ENCODE measurements at regions of chr2 and their contacts with region 1.

Region 1: DNA sequence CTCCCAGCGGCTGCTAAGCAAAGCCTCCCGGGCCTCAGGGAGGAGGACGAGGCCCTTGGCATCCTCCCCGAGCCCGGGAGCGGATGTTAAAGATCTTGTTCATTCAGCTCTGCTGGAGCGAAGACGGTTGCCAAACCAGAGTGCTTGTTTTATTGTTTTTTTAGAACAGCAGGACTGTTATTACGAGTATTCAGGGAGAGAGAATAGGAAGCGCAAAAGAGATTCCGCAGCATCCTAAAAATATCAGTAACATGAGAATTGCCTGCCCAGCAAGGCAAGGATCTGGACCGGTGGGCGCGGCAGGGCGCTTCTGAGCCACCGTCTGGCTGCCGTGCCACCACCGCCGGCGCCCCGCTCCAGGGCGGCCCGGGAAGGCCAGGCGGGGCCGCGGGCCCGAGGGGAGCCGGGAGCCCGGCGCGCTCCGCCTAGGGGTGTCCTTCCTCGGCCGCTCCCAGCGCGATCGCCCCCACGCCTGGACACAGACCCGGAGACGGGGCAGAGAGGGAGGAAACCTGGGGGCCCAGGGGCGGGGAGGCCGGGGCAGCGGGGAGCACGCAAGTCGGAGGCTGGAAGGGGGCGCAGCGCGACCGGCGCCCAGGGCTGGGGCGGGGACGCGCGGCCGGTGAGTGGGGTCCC is 859 bp downstream of the CYS1 start:
- DNase-seq: peak; percentile 31
- H3K4me3 ChIP-seq: no peak overlapping the region
- H3K27ac ChIP-seq: no peak overlapping the region
- H3K4me1 ChIP-seq: peaks cover 55% of the 10 kb centered on the region
- CTCF ChIP-seq: no peak

Region 2: DNA sequence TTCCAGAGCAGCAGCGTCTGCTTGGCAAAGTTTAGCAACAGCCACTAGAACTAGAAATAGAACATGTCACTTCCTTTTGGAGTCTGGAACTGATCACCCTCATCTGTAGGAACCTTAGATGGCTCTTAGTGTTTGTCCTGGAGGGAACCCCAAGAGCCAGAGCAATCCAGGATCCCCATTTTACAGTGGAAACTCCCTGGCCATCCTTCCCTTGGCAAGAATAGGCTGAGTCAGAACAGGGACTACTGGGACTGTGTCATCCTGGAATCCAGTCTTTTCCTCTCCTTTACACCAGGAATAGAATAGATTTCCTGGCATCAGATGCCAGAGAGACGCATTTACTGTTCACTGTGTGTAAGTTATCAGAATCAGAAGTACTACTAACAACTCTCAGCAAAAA is 161.1 kb before region 1 on chr2:
- CTCF ChIA-PET with region 1: no interaction called
- POLR2A ChIA-PET with region 1: no interaction called
- intact Hi-C with region 1: no loop called
- DNase-seq: no peak
- H3K4me3 ChIP-seq: no peak overlapping the region
- H3K27ac ChIP-seq: no peak overlapping the region
- H3K4me1 ChIP-seq: no peaks in the 10 kb centered on the region
- CTCF ChIP-seq: no peak

Region 3: GRCh38 chr2:9961013-9961412 is 118.3 kb before region 1 on chr2:
- CTCF ChIA-PET with region 1: no interaction called
- POLR2A ChIA-PET with region 1: no interaction called
- intact Hi-C with region 1: no loop called
- DNase-seq: no peak
- H3K4me3 ChIP-seq: no peak overlapping the region
- H3K27ac ChIP-seq: no peak overlapping the region
- H3K4me1 ChIP-seq: peaks cover 7% of the 10 kb centered on the region
- CTCF ChIP-seq: no peak

Region 4: GRCh38 chr2:10097352-10098148 is 18.2 kb after region 1 on chr2:
- CTCF ChIA-PET with region 1: interaction called, 8 read pairs
- POLR2A ChIA-PET with region 1: interaction called, 6 read pairs
- intact Hi-C with region 1: loop called (anchors 1 kb)
- DNase-seq: peak; percentile 59
- H3K4me3 ChIP-seq: no peak overlapping the region
- H3K27ac ChIP-seq: no peak overlapping the region
- H3K4me1 ChIP-seq: peaks cover 10% of the 10 kb centered on the region
- CTCF ChIP-seq: peak; percentile 95

Region 5: DNA sequence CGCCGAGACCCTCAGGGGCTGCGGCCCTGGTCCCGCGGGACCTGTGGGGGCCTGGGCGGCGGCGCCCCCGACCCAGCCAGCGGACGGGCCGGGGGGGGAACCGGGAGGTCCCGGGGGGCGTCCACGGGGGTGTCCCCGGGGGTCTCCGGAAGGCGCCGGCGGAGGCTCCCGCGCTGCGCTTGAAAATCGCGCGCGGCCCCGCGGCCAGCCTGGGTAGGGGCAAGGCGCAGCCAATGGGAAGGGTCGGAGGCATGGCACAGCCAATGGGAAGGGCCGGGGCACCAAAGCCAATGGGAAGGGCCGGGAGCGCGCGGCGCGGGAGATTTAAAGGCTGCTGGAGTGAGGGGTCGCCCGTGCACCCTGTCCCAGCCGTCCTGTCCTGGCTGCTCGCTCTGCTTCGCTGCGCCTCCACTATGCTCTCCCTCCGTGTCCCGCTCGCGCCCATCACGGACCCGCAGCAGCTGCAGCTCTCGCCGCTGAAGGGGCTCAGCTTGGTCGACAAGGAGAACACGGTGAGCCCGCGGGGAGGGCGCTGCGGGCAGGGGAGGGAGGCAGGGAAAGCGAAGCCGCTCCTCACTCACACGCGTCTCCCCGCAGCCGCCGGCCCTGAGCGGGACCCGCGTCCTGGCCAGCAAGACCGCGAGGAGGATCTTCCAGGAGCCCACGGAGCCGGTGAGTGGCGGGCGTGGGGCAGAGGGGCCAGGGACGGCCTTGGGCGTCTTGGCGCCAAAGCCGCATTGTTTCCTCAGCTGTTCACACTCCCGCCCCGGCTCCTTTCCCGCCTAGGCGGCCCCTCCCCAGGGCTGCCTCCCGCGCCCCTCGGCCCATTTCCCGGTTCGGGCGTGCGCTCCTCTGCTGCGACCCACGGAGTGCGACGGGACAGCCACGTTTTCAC is 43.3 kb after region 1 on chr2 and contains the start of gene RRM2:
- CTCF ChIA-PET with region 1: no interaction called
- POLR2A ChIA-PET with region 1: interaction called, 7 read pairs
- intact Hi-C with region 1: loop called (anchors 1 kb)
- DNase-seq: peak; percentile 97
- H3K4me3 ChIP-seq: peak within 1 kb of the TSS; percentile 81
- H3K27ac ChIP-seq: peak within 1 kb of the TSS; percentile 91
- H3K4me1 ChIP-seq: peaks cover 54% of the 10 kb centered on the region
- CTCF ChIP-seq: no peak
- total RNA-seq, gene RRM2: 181 and 222 TPM in 2 replicates